Body of pancreas (tissue), 4 donors: ENCODE measurements at regions of chr14 and their contacts with region 1.

Region 1: GRCh38 chr14:34365309-34365915 is 96.6 kb downstream of the SPTSSA start:
- DNase-seq: no peak
- ATAC-seq: peak; percentile 63
- H3K4me3 ChIP-seq: no peak overlapping the region
- H3K27ac ChIP-seq: no peak overlapping the region
- H3K4me1 ChIP-seq: peaks cover 23% of the 10 kb centered on the region
- H3K27me3 ChIP-seq: no peaks in the 10 kb centered on the region
- CTCF ChIP-seq: peak in 6 of 7 experiments; percentile 14 to 63 (median 50)
- POLR2A ChIP-seq: no peak

Region 2: DNA sequence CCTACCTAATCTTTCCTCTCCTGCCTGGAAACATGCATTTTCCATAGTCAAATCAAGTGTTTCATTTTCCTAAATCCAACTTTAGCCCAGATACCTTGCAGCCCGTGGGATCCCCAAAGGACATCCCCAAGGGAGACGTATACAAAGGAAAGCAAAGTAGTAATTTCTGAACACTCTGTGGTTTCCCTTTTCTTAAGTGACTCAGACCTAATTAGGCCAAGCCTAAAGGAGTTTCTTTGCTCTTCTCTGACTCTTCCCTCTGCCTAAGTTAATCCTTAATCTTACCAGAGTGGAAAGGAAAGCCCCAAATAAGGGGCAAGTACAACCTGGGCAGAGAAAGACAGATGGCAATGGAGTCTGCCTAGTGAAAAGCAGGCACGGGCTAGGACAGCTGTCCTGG is 153.7 kb before region 1 on chr14:
- intact Hi-C with region 1: no loop called
- DNase-seq: no peak
- ATAC-seq: no peak
- H3K4me3 ChIP-seq: no peak overlapping the region
- H3K27ac ChIP-seq: no peak overlapping the region
- H3K4me1 ChIP-seq: no peaks in the 10 kb centered on the region
- H3K27me3 ChIP-seq: no peaks in the 10 kb centered on the region
- CTCF ChIP-seq: no peak
- POLR2A ChIP-seq: no peak

Region 3: DNA sequence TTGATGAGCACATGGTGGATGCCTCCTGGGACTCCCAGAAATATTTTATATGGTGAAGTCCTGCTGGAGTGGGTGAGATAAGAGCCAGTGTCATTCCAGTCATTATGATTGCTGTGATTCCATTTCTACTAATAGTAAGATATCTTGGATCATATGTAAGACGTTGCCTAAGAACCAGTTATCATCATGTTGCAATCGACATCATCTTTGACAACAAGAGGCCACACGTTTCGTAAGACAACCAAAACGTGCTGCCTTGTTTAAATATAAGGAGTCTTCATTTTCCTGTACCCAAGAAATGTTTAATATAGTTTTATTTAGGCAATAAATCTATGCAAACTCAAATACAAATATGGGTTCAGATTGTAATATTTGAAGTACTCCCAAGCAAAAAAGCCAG is 38.2 kb after region 1 on chr14:
- intact Hi-C with region 1: no loop called
- DNase-seq: no peak
- ATAC-seq: no peak
- H3K4me3 ChIP-seq: no peak overlapping the region
- H3K27ac ChIP-seq: no peak overlapping the region
- H3K4me1 ChIP-seq: no peaks in the 10 kb centered on the region
- H3K27me3 ChIP-seq: no peaks in the 10 kb centered on the region
- CTCF ChIP-seq: no peak
- POLR2A ChIP-seq: no peak

Region 4: DNA sequence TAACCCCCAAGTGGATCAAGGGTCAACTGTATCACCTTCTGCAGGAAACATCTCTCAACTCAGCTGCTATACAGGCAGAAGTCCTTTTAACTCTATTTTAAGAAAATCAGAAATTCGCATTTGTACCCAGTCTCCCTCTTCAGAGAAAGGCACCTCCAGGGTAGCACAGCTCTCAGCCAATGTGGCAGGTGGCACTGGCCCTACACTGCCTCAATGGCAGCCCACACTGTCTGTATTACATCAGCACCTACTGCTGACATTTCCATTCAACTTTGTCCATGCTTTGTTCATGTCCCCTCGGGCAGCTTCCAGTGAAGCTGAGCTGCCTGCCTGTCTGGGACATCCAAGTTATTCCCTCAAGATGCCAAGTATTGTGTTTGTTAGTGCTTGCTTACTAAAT is 87.8 kb after region 1 on chr14:
- intact Hi-C with region 1: loop called (anchors 10 kb)
- DNase-seq: no peak
- ATAC-seq: no peak
- H3K4me3 ChIP-seq: no peak overlapping the region
- H3K27ac ChIP-seq: no peak overlapping the region
- H3K4me1 ChIP-seq: no peaks in the 10 kb centered on the region
- H3K27me3 ChIP-seq: no peaks in the 10 kb centered on the region
- CTCF ChIP-seq: no peak
- POLR2A ChIP-seq: no peak

Region 5: GRCh38 chr14:34496679-34497513 is 131.5 kb after region 1 on chr14:
- intact Hi-C with region 1: loop called (anchors 10 kb)
- DNase-seq: peak; percentile 25 to 62 (median 44)
- ATAC-seq: peak; percentile 72
- H3K4me3 ChIP-seq: no peak overlapping the region
- H3K27ac ChIP-seq: peak overlapping the region in 2 of 4 donors; percentile 33 to 55
- H3K4me1 ChIP-seq: no peaks in the 10 kb centered on the region
- H3K27me3 ChIP-seq: no peaks in the 10 kb centered on the region
- CTCF ChIP-seq: no peak
- POLR2A ChIP-seq: peak in 1 of 3 donors; percentile 9

Region 6: GRCh38 chr14:34629657-34630529 is 264.5 kb after region 1 on chr14 and contains the start of gene SNX6:
- intact Hi-C with region 1: no loop called
- DNase-seq: peak; percentile 84 to 87 (median 86)
- ATAC-seq: peak; percentile 99
- H3K4me3 ChIP-seq: peak within 1 kb of the TSS; percentile 62 to 85
- H3K27ac ChIP-seq: peak within 1 kb of the TSS; percentile 70 to 88 (median 87)
- H3K4me1 ChIP-seq: peaks cover 10% of the 10 kb centered on the region
- H3K27me3 ChIP-seq: no peaks in the 10 kb centered on the region
- CTCF ChIP-seq: no peak
- POLR2A ChIP-seq: peak; percentile 41 to 69 (median 68)
- total RNA-seq, gene SNX6: 28.8 to 41.2 TPM